Activated B cell treated with CpG ODN at 0.5 μM for 24 hours (primary cell): ENCODE measurements at regions of chr1 and their contacts with region 1.

Region 1: GRCh38 chr1:226407497-226408284 is at the start of gene PARP1:
- DNase-seq: peak; percentile 95
- ATAC-seq: peak; percentile 83
- H3K4me3 Mint-ChIP-seq: peak within 1 kb of the TSS; percentile 98
- H3K27ac Mint-ChIP-seq: peak within 1 kb of the TSS; percentile 96
- H3K4me1 Mint-ChIP-seq: peaks cover 57% of the 10 kb centered on the region
- H3K27me3 Mint-ChIP-seq: no peaks in the 10 kb centered on the region
- CTCF ChIP-seq: peak; percentile 41
- total RNA-seq, gene PARP1: 232 and 260 TPM in 2 replicates

Region 2: DNA sequence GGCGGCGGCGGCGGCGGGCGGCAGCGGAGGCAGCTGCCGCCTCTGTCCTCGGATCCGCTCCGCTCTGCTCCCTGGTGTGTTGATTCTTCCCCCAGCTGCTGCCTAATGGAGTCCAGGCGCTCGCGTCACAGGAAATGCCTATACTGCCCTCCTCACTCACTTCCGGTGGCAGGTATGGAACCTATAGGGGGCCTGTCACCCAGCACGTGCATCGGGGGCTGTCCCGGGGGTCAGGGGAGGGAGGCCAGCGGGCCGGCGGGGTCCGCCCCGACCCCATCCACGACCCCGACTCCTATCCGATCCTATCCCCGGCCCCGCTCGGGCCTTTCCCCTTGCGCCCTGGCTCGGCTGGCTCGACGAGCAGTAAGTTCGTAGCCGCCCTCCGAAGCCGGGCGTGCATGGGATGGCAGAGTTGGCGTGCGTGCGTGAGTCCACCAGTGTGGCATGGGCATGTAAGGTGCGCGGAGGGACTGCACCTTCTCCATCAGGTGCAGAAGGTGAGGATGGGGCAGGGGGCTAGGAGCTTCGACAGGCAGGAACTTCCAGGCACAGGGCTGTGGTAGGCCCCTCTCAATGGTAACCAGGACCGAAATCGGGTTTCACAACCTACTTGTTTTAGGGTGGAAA is 1972.9 kb before region 1 on chr1 and contains the start of gene WDR26:
- CTCF ChIA-PET with region 1: no interaction called
- POLR2A ChIA-PET with region 1: no interaction called
- intact Hi-C with region 1: loop called (anchors 5 kb)
- DNase-seq: peak; percentile 74
- ATAC-seq: peak; percentile 85
- H3K4me3 Mint-ChIP-seq: peak within 1 kb of the TSS; percentile 96
- H3K27ac Mint-ChIP-seq: peak within 1 kb of the TSS; percentile 97
- H3K4me1 Mint-ChIP-seq: peaks cover 47% of the 10 kb centered on the region
- H3K27me3 Mint-ChIP-seq: no peaks in the 10 kb centered on the region
- CTCF ChIP-seq: no peak
- total RNA-seq, gene WDR26: 75.3 and 91.3 TPM in 2 replicates

Region 3: DNA sequence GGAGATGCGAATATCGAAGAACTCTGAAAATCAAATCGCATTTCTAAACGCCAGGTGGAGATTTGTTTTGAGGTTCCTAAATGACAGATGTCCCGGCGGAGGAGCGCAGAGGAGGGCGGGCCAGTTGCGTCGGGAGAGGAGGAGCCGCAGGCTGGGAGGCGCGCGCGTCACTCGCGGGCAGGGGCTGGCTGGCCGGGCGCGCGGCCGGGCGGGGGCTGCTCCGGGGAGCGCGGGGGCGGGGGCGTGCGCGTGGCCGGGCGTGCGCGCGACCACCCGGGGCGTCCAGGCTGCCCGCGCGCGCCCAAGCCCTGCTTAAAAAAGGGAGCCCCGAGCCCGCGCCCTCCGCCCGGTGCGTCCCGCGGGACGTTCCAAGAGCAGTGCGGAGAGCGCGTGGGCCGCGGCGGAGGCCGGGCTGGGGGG is 297.9 kb before region 1 on chr1:
- CTCF ChIA-PET with region 1: interaction called, 3 read pairs
- POLR2A ChIA-PET with region 1: interaction called, 16 read pairs
- intact Hi-C with region 1: loop called (anchors 1 kb)
- DNase-seq: peak; percentile 90
- ATAC-seq: peak; percentile 66
- H3K4me3 Mint-ChIP-seq: peak overlapping the region; percentile 91
- H3K27ac Mint-ChIP-seq: peak overlapping the region; percentile 93
- H3K4me1 Mint-ChIP-seq: peaks cover 42% of the 10 kb centered on the region
- H3K27me3 Mint-ChIP-seq: no peaks in the 10 kb centered on the region
- CTCF ChIP-seq: no peak

Region 4: DNA sequence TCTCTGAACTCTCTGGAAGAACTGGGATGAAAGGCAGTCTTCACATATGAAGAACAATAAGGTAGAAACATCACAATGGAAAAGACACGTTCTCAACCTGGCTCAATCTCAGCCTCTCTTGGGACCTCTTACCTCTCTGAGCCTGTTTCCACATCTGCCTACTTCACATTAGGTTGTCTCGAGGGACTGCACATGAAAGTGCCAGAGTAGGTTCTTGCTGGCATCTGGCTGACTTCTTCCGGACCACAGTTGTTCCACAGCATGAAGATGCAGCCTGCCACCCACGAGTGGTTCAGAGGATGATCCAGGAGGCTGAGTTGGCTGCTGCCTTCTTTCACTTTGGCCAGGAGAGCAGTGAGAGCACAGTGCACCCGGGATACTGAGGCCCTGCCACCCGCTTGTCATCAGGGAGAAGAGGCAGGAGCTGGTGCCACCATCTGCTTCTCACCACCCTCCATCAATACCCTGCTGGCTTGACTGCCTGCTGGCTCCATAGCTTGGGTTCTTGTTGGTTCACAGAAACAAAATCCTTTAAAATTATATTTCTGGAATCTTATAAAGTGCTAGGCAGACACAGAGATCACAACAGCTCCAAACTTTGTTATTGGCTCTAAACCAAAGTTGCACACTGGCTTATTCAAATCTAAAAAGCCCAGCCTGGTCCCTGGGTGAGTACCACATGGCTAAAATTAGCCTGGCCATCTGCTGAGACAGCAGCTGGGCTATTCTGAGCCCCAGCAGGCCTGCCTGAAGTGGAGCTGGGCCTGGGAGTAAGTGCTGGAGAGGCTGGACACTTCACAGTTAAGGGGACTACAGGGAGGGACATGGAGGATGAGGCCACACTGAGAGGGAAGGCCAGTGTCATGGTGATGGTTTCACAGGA is 51.8 kb before region 1 on chr1:
- CTCF ChIA-PET with region 1: no interaction called
- POLR2A ChIA-PET with region 1: interaction called, 4 read pairs
- intact Hi-C with region 1: loop called (anchors 2 kb)
- DNase-seq: no peak
- ATAC-seq: peak; percentile 69
- H3K4me3 Mint-ChIP-seq: peak overlapping the region; percentile 47
- H3K27ac Mint-ChIP-seq: peak overlapping the region; percentile 84
- H3K4me1 Mint-ChIP-seq: peaks cover 58% of the 10 kb centered on the region
- H3K27me3 Mint-ChIP-seq: no peaks in the 10 kb centered on the region
- CTCF ChIP-seq: no peak

Region 5: DNA sequence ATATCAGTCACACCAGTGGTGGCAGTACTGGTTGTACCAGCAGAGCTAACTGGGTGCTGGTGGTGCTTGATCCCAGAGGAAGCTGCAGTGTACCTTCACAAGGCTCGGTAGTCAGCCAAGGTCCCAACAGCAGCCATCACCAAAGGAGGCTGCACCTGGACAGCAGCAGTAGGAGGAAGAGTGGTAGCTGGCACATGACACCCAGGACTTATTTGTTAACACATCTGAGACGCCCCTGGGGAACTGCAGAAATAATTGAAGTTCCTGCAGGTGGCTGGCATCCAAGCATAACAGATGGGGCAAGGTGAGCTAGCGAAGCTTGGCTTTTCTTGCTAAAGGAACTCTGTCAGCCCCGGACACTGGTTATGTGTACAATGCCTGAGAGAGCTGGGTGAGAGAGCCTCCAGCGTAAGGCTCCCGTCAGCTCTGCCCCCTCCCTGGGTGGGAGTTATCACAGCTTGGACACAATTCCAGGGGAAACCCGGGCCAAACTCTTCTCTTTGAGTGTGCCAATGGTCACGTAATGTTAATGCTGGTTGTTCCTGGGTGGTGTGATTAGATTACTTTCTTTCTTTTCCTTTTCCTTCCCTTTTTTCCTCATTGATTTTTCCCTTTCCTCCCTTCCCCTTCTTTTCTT is 29.3 kb after region 1 on chr1:
- CTCF ChIA-PET with region 1: interaction called, 4 read pairs
- POLR2A ChIA-PET with region 1: interaction called, 3 read pairs
- intact Hi-C with region 1: loop called (anchors 1 kb)
- DNase-seq: no peak
- ATAC-seq: peak; percentile 82
- H3K4me3 Mint-ChIP-seq: peak overlapping the region; percentile 30
- H3K27ac Mint-ChIP-seq: peak overlapping the region; percentile 60
- H3K4me1 Mint-ChIP-seq: peaks cover 39% of the 10 kb centered on the region
- H3K27me3 Mint-ChIP-seq: no peaks in the 10 kb centered on the region
- CTCF ChIP-seq: no peak

Region 6: GRCh38 chr1:226736908-226737818 is 329.5 kb after region 1 on chr1:
- CTCF ChIA-PET with region 1: no interaction called
- POLR2A ChIA-PET with region 1: no interaction called
- intact Hi-C with region 1: loop called (anchors 5 kb)
- DNase-seq: peak; percentile 51
- ATAC-seq: peak; percentile 44
- H3K4me3 Mint-ChIP-seq: peak overlapping the region; percentile 93
- H3K27ac Mint-ChIP-seq: peak overlapping the region; percentile 86
- H3K4me1 Mint-ChIP-seq: peaks cover 68% of the 10 kb centered on the region
- H3K27me3 Mint-ChIP-seq: no peaks in the 10 kb centered on the region
- CTCF ChIP-seq: no peak

Region 7: GRCh38 chr1:227728059-227728891 is 1320.6 kb after region 1 on chr1:
- CTCF ChIA-PET with region 1: no interaction called
- POLR2A ChIA-PET with region 1: no interaction called
- intact Hi-C with region 1: loop called (anchors 5 kb)
- DNase-seq: peak; percentile 47
- ATAC-seq: peak; percentile 67
- H3K4me3 Mint-ChIP-seq: peak overlapping the region; percentile 80
- H3K27ac Mint-ChIP-seq: peak overlapping the region; percentile 76
- H3K4me1 Mint-ChIP-seq: peaks cover 38% of the 10 kb centered on the region
- H3K27me3 Mint-ChIP-seq: peaks cover 2% of the 10 kb centered on the region
- CTCF ChIP-seq: no peak